PC-9 (cell line): ENCODE measurements at regions of chr1 and their contacts with region 1.

Region 1: GRCh38 chr1:82110855-82111254 is 310.1 kb downstream of the ADGRL2 start:
- DNase-seq: no peak
- H3K4me3 ChIP-seq: no peak overlapping the region
- H3K27ac ChIP-seq: no peak overlapping the region
- H3K4me1 ChIP-seq: no peaks in the 10 kb centered on the region
- H3K27me3 ChIP-seq: no peaks in the 10 kb centered on the region
- CTCF ChIP-seq: no peak

Region 2: GRCh38 chr1:82090104-82090503 is 20.8 kb before region 1 on chr1:
- CTCF ChIA-PET with region 1: interaction called, 11 read pairs
- POLR2A ChIA-PET with region 1: no interaction called
- intact Hi-C with region 1: no loop called
- DNase-seq: no peak
- H3K4me3 ChIP-seq: no peak overlapping the region
- H3K27ac ChIP-seq: no peak overlapping the region
- H3K4me1 ChIP-seq: no peaks in the 10 kb centered on the region
- H3K27me3 ChIP-seq: no peaks in the 10 kb centered on the region
- CTCF ChIP-seq: peak; percentile 65